Breast epithelium (tissue), 4 donors: ENCODE measurements at regions of chr12 and their contacts with region 1.

Region 1: DNA sequence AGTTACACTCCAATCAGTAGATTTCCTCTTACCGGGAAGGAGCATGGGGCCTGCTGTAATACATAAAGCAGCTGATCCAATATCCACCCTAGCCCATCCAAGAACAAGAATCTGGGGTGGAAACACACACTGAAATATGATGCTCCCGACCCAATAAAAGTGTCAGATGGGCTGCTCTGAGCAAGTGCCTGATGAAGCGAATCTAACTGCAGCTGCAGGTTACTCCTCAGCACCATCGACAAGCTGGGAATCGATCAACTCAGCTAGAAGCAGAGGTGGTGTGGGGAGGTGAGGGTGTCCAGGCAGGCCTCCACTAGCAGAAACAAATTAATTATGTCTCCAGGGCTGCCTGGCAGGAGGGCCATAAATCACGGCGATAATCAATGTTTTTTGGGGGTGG is 64.0 kb upstream of the WSCD2 start:
- DNase-seq: no peak
- H3K4me3 ChIP-seq: no peak overlapping the region
- H3K27ac ChIP-seq: no peak overlapping the region
- H3K4me1 ChIP-seq: no peaks in the 10 kb centered on the region
- H3K27me3 ChIP-seq: peaks cover 0 to 7% of the 10 kb centered on the region in 2 donors
- CTCF ChIP-seq: no peak
- POLR2A ChIP-seq: no peak

Region 2: GRCh38 chr12:107998863-107999262 is 66.2 kb before region 1 on chr12:
- intact Hi-C with region 1: loop called (anchors 2 kb)
- DNase-seq: no peak
- H3K4me3 ChIP-seq: no peak overlapping the region
- H3K27ac ChIP-seq: no peak overlapping the region
- H3K4me1 ChIP-seq: no peaks in the 10 kb centered on the region
- H3K27me3 ChIP-seq: peaks cover 0 to 10% of the 10 kb centered on the region in 2 donors
- CTCF ChIP-seq: no peak
- POLR2A ChIP-seq: no peak